Activated CD8-positive, alpha-beta T cell treated with anti-CD3 and anti-CD28 coated beads, Interleukin-2, amount 10 ng/mL, durations not matched to agents 7 days and 5 days (primary cell): ENCODE measurements at regions of chr10 and their contacts with region 1.

Region 1: DNA sequence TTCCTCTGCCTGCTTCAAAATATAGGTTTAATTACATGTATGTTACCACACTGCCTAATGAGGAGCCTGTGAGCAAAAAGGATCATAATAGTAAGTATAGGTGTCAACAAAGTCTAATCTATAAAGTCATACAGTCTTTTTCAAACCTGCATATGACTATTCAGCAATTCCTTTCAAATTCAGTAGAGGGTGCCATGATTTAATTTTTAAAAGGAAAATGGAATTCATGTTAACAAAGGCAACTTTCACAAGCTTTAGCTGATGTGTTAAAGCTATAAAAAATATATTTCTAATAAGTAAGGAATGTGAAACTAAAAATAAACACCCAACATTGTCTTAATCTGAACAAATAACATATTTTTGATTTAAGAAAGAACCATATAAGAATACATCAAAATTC is 52.1 kb downstream of the MPP7 start:
- DNase-seq: no peak
- ATAC-seq: no peak
- H3K4me3 Mint-ChIP-seq: no peak overlapping the region
- H3K27ac Mint-ChIP-seq: no peak overlapping the region
- H3K4me1 Mint-ChIP-seq: peaks cover 16% of the 10 kb centered on the region
- H3K27me3 Mint-ChIP-seq: no peaks in the 10 kb centered on the region

Region 2: GRCh38 chr10:28179006-28179742 is 71.6 kb before region 1 on chr10:
- CTCF ChIA-PET with region 1: no interaction called
- POLR2A ChIA-PET with region 1: no interaction called
- DNase-seq: peak; percentile 68
- ATAC-seq: peak; percentile 50
- H3K4me3 Mint-ChIP-seq: peak overlapping the region; percentile 87
- H3K27ac Mint-ChIP-seq: peak overlapping the region; percentile 96
- H3K4me1 Mint-ChIP-seq: peaks cover 18% of the 10 kb centered on the region
- H3K27me3 Mint-ChIP-seq: no peaks in the 10 kb centered on the region

Region 3: GRCh38 chr10:28214219-28214618 is 36.6 kb before region 1 on chr10:
- CTCF ChIA-PET with region 1: no interaction called
- POLR2A ChIA-PET with region 1: no interaction called
- DNase-seq: no peak
- ATAC-seq: no peak
- H3K4me3 Mint-ChIP-seq: no peak overlapping the region
- H3K27ac Mint-ChIP-seq: no peak overlapping the region
- H3K4me1 Mint-ChIP-seq: peaks cover 3% of the 10 kb centered on the region
- H3K27me3 Mint-ChIP-seq: no peaks in the 10 kb centered on the region

Region 4: GRCh38 chr10:28266449-28267224 is 15.9 kb after region 1 on chr10:
- CTCF ChIA-PET with region 1: interaction called, 10 read pairs
- POLR2A ChIA-PET with region 1: no interaction called
- DNase-seq: no peak
- ATAC-seq: no peak
- H3K4me3 Mint-ChIP-seq: no peak overlapping the region
- H3K27ac Mint-ChIP-seq: no peak overlapping the region
- H3K4me1 Mint-ChIP-seq: peaks cover 6% of the 10 kb centered on the region
- H3K27me3 Mint-ChIP-seq: no peaks in the 10 kb centered on the region